T-cell (primary cell): ENCODE measurements at regions of chrX and their contacts with region 1.

Region 1: DNA sequence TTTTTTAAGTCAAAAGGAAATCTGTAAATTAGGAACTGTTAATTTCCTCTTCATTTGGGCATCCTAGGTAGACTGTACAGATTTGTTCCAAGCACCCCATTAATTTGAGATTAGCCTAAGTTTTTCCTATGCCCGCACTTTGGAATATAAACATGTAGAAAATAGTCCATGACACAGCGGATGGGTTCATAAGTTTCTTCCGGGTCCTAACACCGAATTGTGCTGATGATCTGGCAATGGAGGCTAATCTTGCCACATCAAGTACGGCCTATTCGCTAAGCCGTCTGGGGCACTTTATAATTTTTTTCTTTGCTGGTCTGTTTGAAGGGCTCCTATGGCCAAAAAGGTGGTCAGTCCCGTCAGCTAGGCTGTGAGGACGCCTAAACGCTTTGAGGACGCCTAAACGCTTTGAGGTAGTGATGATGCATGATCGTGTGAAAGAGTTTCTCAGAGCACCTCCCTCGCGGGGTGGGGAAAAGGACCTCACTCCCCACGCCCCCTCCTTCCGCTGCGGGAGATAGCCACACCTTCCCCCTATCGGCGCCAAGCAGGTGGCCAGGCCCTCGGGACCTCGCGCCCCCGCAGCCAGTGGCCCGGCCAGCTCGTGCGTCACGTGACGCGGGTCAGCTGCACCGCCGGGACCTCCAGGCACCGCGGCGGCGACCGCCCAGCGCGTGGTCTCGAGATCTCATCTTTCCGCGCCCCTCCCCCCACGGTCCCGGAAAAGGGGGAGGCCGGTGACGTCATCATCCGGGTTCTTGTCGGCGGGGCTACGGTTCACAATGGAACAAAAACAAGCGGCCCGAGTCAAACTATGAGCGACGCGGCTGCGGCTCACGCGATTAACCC is 977 bp upstream of the USP9X start:
- DNase-seq: peak; percentile 90 to 100 (median 94)
- ATAC-seq: peak; percentile 65 to 70 (median 68)
- H3K4me3 ChIP-seq: peak overlapping the region; percentile 88 to 89
- H3K4me3 Mint-ChIP-seq: peak overlapping the region; percentile 91 to 95 (median 93)
- H3K27ac ChIP-seq: peak overlapping the region; percentile 99
- H3K27ac Mint-ChIP-seq: peak overlapping the region; percentile 98 to 99
- H3K4me1 ChIP-seq: peaks cover 0 to 14% of the 10 kb centered on the region in 2 experiments
- H3K4me1 Mint-ChIP-seq: peaks cover 21 to 31% (median 24%) of the 10 kb centered on the region in 3 donors
- H3K27me3 ChIP-seq: no peaks in the 10 kb centered on the region
- H3K27me3 Mint-ChIP-seq: peaks cover 0 to 9% of the 10 kb centered on the region in 2 donors

Region 2: GRCh38 chrX:41045960-41046567 is 38.2 kb before region 1 on chrX:
- CTCF ChIA-PET with region 1: no interaction called
- POLR2A ChIA-PET with region 1: no interaction called
- DNase-seq: peak in 1 of 35 experiments; percentile 1
- ATAC-seq: no peak
- H3K4me3 ChIP-seq: no peak overlapping the region
- H3K4me3 Mint-ChIP-seq: no peak overlapping the region
- H3K27ac ChIP-seq: no peak overlapping the region
- H3K27ac Mint-ChIP-seq: no peak overlapping the region
- H3K4me1 ChIP-seq: no peaks in the 10 kb centered on the region
- H3K4me1 Mint-ChIP-seq: peaks cover 0 to 5% (median 3%) of the 10 kb centered on the region in 3 donors
- H3K27me3 ChIP-seq: no peaks in the 10 kb centered on the region
- H3K27me3 Mint-ChIP-seq: peaks cover 0 to 11% of the 10 kb centered on the region in 2 donors

Region 3: GRCh38 chrX:41100200-41100599 is 15.9 kb after region 1 on chrX:
- CTCF ChIA-PET with region 1: interaction called in 1 of 2 experiments, 8 read pairs
- POLR2A ChIA-PET with region 1: interaction called, 3 to 11 read pairs
- DNase-seq: no peak
- ATAC-seq: no peak
- H3K4me3 ChIP-seq: no peak overlapping the region
- H3K4me3 Mint-ChIP-seq: peak overlapping the region in 1 of 3 donors; percentile 21
- H3K27ac ChIP-seq: no peak overlapping the region
- H3K27ac Mint-ChIP-seq: no peak overlapping the region
- H3K4me1 ChIP-seq: peaks cover 9 to 28% of the 10 kb centered on the region in 2 experiments
- H3K4me1 Mint-ChIP-seq: peaks cover 70 to 77% (median 70%) of the 10 kb centered on the region in 3 donors
- H3K27me3 ChIP-seq: no peaks in the 10 kb centered on the region
- H3K27me3 Mint-ChIP-seq: no peaks in the 10 kb centered on the region